Spleen (tissue), 13 donors: ENCODE measurements at regions of chr1 and their contacts with region 1.

Region 1: DNA sequence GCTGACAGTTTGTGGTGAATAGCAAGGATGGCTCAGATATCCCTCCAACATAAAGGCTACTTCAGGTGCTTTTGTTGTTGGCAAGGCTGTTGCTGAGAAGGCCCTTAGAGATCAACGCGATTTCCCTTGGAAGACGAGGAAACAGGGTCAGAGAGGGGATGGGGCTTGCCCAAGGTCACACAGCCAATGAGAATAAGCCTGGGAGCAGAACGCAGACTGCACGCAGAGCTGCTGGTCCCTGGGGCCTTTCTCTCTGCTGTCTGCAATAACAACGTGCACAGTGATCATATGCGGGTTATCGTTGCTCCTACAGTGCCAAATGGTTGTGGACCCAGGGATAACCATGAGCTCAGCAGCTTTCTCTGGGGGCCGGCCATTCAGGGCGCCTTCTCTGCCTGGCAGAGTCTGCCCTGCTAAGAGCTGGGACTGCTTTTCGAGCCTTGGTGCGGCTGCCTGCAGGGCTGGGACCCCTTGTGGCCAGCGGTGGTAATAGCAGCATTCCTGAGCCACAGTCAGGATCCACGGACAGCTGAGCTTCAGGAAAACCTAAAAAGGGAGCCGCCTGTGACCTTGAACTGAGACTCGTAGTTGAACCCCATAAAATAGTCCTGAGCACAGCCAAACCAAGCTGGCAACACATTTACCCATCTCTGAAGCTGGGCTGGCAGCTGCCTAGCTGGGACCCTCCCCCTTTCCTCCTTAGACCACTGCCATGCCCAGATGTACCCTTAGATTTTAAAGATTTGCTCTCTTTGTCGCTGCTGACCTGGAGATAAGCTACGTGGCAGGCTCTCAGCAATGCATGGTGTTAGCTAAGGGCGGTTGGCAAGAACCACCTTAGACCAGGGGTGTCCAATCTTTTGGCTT is 39.8 kb downstream of the HTR6 start:
- DNase-seq: peak; percentile 84
- H3K4me3 ChIP-seq: no peak overlapping the region
- H3K27ac ChIP-seq: no peak overlapping the region
- H3K4me1 ChIP-seq: peaks cover 4 to 18% (median 8%) of the 10 kb centered on the region in 6 donors
- H3K27me3 ChIP-seq: no peaks in the 10 kb centered on the region
- CTCF ChIP-seq: peak; percentile 52 to 91 (median 85)
- POLR2A ChIP-seq: no peak

Region 2: GRCh38 chr1:19661721-19662228 is 42.7 kb before region 1 on chr1:
- intact Hi-C with region 1: loop called (anchors 5 kb)
- DNase-seq: no peak
- H3K4me3 ChIP-seq: no peak overlapping the region
- H3K27ac ChIP-seq: no peak overlapping the region
- H3K4me1 ChIP-seq: peaks cover 0 to 38% (median 22%) of the 10 kb centered on the region in 6 donors
- H3K27me3 ChIP-seq: peaks cover 5 to 66% (median 30%) of the 10 kb centered on the region in 7 donors
- CTCF ChIP-seq: peak in 8 of 11 experiments; percentile 33 to 72 (median 62)
- POLR2A ChIP-seq: no peak

Region 3: DNA sequence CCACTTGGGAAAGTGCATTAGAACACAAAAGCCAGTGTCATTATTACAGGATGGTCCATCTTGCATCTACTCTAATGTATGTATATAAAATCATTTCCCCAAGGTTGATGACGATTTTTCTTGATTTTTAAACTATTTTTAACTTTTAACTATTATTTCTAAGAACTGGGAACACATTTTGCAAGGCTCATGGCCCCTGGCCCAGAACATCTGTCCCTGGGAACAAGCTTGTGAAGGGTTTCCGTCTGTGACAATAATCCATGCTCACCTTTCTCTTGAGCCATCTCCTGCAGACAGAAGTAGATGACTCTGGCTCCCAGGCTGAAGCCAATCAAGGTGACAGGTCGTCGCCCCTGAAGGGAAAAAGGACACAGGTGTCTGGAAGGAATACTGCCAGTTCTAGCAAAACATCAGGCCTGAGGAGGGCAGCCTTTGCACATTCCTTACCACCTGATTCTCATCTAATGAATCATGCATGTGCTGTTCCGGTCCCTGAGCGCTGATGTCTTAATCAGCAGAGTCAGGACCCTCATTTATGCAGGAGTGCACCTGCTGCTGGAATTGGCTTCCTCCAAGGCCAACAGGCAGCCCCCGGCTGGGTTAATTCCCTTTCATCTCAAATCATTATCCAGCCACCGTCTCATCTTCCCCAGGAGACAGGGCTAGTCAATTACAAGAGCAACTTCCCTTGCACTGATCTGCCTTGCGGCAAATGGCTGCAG is 32.8 kb after region 1 on chr1:
- intact Hi-C with region 1: no loop called
- DNase-seq: no peak
- H3K4me3 ChIP-seq: no peak overlapping the region
- H3K27ac ChIP-seq: no peak overlapping the region
- H3K4me1 ChIP-seq: no peaks in the 10 kb centered on the region
- H3K27me3 ChIP-seq: no peaks in the 10 kb centered on the region
- CTCF ChIP-seq: no peak
- POLR2A ChIP-seq: no peak